Caki2 (cell line): ENCODE measurements at regions of chr11 and their contacts with region 1.

Region 1: GRCh38 chr11:27183672-27184457 is 143.2 kb downstream of the BBOX1 start:
- DNase-seq: peak; percentile 61

Region 2: GRCh38 chr11:26792941-26793340 is 390.9 kb before region 1 on chr11:
- in situ Hi-C with region 1: no loop called
- DNase-seq: no peak

Region 3: DNA sequence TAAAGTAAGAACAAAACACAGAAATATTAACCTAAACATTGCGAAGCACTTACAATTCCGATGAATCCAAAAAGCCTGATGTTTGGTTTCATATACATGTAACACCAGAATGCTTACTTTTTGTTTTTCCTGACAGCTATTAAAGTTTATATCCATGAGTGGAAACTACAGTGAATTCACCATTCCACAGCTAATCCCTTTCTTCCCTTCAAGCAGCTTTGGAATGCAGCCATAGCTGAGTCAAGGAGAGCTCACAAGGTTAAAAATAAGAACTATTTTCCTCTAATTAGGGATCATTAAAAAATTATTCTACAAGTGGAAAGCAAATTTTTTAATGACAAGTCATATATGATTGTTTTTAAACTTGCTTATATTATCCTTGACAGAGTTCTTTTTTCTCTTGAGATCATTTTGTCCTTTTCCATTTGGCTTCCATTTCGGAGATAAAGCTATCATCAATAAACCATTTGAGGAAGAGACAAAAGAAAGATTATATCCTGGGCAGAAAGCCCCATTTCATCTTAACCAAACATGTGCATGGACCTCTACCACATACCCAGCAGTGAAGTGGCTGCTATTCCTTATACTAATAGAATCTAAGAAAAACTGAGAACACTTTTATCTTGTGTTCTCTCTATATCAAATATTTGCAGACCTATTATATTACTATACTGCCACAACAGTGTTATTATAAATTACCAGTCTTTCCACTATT is 209.6 kb before region 1 on chr11:
- in situ Hi-C with region 1: no loop called
- DNase-seq: no peak

Region 4: GRCh38 chr11:27296497-27296896 is 112.6 kb after region 1 on chr11:
- in situ Hi-C with region 1: loop called (anchors 25 kb)
- DNase-seq: peak; percentile 47

Region 5: DNA sequence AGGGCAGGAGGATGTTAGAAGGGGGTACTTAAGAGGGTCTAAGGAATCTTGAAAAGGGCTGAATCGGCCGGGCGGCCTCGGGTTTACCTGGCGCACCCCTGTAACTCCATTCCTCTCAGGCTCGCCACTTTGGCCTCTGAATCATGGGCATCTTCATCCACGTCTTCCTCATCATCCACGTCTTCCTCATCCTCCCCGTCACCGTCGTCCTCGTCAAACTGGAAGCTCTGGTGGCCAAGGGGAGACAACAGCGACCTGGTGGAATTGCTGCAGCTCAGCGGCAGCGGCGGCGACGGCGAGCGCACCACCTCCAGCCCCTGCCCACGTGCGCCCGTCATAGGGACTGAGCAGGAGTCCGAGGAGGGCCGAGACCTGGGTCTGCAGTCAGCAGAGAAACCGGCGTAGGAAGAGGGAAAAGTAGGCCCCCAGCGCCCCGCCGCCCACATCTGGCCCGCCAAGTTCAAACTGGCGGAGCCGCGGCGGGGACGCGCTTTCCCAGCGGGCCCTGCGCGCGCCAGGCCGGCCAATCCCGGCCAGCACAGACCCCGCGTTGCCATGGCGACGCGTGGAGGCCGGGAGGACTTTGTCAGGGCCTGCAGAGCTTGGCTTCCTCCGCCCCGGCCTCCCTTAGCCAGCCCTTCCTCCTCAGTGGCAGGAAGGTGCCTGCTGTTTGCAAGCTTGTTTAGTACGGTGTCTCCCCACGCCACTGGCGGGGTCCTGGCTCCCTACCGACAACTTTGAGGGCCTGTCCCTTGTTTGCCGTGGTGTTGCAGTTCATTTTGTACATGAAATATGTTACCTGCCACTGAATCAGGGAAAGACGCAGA is 179.1 kb after region 1 on chr11 and contains the start of gene CCDC34:
- in situ Hi-C with region 1: loop called (anchors 25 kb)
- DNase-seq: peak; percentile 86
- total RNA-seq, gene CCDC34: 16.8 and 29.5 TPM in 2 replicates

Region 6: DNA sequence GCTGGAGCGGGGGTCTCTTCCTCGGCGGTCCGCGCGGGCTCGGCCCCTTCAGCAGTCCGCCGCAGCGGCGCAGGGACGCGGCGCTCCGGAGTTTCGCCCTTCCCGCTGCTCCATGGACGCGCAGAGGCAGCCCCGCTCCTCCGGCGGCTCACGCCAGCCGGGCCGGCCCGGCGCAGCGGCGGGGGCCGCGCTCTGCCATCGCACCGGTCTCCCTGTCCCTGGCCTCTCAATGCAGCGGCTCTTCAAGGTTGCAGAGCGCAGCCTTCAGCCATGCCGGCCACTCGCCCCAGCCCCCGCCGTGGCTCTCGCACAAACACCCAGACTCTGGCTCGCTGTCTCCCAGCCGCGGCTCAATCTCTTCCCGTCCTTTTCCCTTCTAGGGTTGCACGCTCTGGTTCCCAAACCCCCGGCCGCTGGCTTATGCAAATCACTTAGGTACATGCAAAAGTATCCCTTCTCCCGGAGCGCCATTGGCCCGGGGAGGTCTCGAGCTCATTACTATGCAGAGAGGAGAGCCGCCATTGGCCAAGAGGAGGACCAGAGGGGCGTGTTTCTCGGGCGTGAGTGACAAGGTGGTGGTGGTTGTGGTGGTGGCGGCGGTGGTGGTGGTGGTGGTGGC is 288.6 kb after region 1 on chr11 and contains the start of gene LGR4:
- in situ Hi-C with region 1: loop called (anchors 25 kb)
- DNase-seq: peak; percentile 97
- total RNA-seq, gene LGR4: 56.9 and 58.4 TPM in 2 replicates